Posterior vena cava (tissue), 2 donors: ENCODE measurements at regions of chr1 and their contacts with region 1.

Region 1: GRCh38 chr1:12113433-12114339 is 50.6 kb downstream of the TNFRSF8 start:
- DNase-seq: peak; percentile 41

Region 2: GRCh38 chr1:13576926-13577325 is 1463.2 kb after region 1 on chr1:
- intact Hi-C with region 1: loop called in 1 of 2 experiments (anchors 5 kb)
- DNase-seq: no peak